Activated CD4-positive, alpha-beta T cell treated with anti-CD3 and anti-CD28 coated beads for 36 hours (primary cell): ENCODE measurements at regions of chr3 and their contacts with region 1.

Region 1: GRCh38 chr3:174614036-174614435 is 245.1 kb upstream of the NAALADL2 start:
- DNase-seq: no peak
- ATAC-seq: no peak
- H3K4me3 Mint-ChIP-seq: no peak overlapping the region
- H3K27ac Mint-ChIP-seq: no peak overlapping the region
- H3K4me1 Mint-ChIP-seq: no peaks in the 10 kb centered on the region
- H3K27me3 Mint-ChIP-seq: no peaks in the 10 kb centered on the region

Region 2: GRCh38 chr3:174662653-174663052 is 48.6 kb after region 1 on chr3:
- CTCF ChIA-PET with region 1: no interaction called
- POLR2A ChIA-PET with region 1: no interaction called
- intact Hi-C with region 1: loop called in 1 of 2 experiments (anchors 10 kb)
- DNase-seq: no peak
- ATAC-seq: no peak
- H3K4me3 Mint-ChIP-seq: no peak overlapping the region
- H3K27ac Mint-ChIP-seq: no peak overlapping the region
- H3K4me1 Mint-ChIP-seq: no peaks in the 10 kb centered on the region
- H3K27me3 Mint-ChIP-seq: no peaks in the 10 kb centered on the region